ENCODE measurements at regions of chr18 and their contacts with region 1.

Region 1: GRCh38 chr18:12376718-12377555 is at the start of gene AFG3L2:
- DNase-seq: peak; percentile 100
- H3K4me3 Mint-ChIP-seq: peak within 1 kb of the TSS; percentile 91
- H3K27ac Mint-ChIP-seq: peak within 1 kb of the TSS; percentile 90
- H3K4me1 Mint-ChIP-seq: peaks cover 37% of the 10 kb centered on the region
- H3K27me3 Mint-ChIP-seq: peaks cover 9% of the 10 kb centered on the region
- total RNA-seq, gene AFG3L2: 61.8 and 65.1 TPM in 2 replicates

Region 2: DNA sequence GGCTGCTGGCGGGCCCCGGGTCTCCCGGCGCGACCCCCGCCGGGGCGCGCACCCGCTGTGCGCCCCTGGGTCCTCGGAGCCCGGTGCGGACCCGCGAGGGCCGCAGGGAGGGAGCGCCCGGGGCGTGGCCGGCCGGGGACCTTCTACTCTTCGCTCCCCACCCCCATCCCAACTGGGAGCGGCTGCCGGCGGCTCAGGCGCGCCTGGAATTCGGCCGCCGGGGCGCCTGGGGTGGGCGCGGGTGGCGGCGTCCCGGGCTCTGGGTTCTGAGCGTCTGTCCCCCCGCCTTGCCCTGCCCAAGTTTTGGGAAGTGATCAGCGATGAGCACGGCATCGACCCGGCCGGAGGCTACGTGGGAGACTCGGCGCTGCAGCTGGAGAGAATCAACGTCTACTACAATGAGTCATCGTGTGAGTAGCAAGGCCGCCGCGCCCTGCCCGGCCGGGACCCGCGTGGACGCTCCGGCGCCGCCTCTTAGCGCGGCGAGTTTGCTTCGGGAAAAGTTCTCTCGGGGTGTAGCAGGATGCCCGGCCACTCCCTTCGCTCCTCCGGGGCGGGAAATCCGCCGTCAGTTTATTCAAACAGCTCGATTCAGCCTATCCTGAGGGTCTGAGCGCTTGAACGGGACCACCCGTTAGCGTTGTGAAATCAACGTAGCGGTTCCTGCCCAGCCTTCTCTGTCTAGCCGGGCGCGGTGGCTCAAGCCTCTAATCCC is 68.4 kb before region 1 on chr18:
- intact Hi-C with region 1: loop called (anchors 1 kb)
- DNase-seq: peak; percentile 23
- H3K4me3 Mint-ChIP-seq: peak overlapping the region; percentile 84
- H3K27ac Mint-ChIP-seq: peak overlapping the region; percentile 68
- H3K4me1 Mint-ChIP-seq: peaks cover 16% of the 10 kb centered on the region
- H3K27me3 Mint-ChIP-seq: peaks cover 36% of the 10 kb centered on the region

Region 3: DNA sequence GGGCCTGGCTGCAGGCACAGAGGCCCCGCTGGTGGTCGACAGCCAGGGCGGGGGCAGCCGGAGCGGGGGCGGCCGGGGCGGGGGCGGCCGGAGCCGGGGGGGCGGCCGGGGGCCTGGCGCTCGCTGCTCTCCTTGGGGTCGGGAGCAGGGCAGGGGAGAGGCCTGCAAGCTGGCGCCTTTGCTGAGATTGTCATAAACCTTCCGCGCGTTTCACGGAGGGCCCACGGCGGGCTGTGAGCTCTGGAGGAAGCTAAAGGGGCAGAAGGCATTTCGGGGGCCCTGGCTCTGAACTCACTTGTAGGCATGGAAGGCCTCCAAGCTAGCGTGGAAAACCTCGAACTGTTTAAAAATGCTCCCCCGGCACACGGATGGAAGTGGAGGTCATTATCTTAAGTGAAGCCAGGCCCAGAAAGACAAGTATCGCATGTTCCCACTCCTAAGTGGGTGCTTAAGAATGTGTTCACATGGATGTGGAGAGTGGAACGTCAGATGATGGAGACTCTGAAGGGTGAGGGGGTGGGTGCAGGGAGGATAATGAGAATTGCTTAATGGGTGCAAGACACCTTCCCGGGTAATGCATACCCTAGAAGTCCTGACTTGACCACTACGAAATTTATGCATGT is 31.4 kb after region 1 on chr18:
- intact Hi-C with region 1: loop called (anchors 1 kb)
- DNase-seq: no peak
- H3K4me3 Mint-ChIP-seq: peak overlapping the region; percentile 74
- H3K27ac Mint-ChIP-seq: peak overlapping the region; percentile 21
- H3K4me1 Mint-ChIP-seq: peaks cover 29% of the 10 kb centered on the region
- H3K27me3 Mint-ChIP-seq: peaks cover 32% of the 10 kb centered on the region

Region 4: GRCh38 chr18:12883684-12884405 is 506.9 kb after region 1 on chr18 and contains the start of gene PTPN2:
- intact Hi-C with region 1: loop called (anchors 2 kb)
- DNase-seq: peak; percentile 90
- H3K4me3 Mint-ChIP-seq: peak within 1 kb of the TSS; percentile 94
- H3K27ac Mint-ChIP-seq: peak within 1 kb of the TSS; percentile 90
- H3K4me1 Mint-ChIP-seq: peaks cover 54% of the 10 kb centered on the region
- H3K27me3 Mint-ChIP-seq: no peaks in the 10 kb centered on the region
- total RNA-seq, gene PTPN2: 57.3 and 60.6 TPM in 2 replicates

Region 5: GRCh38 chr18:12990967-12991838 is 614.3 kb after region 1 on chr18 and contains the start of gene CEP192:
- intact Hi-C with region 1: loop called (anchors 1 kb)
- DNase-seq: peak; percentile 98
- H3K4me3 Mint-ChIP-seq: peak within 1 kb of the TSS; percentile 97
- H3K27ac Mint-ChIP-seq: peak within 1 kb of the TSS; percentile 98
- H3K4me1 Mint-ChIP-seq: peaks cover 31% of the 10 kb centered on the region
- H3K27me3 Mint-ChIP-seq: no peaks in the 10 kb centered on the region
- total RNA-seq, gene CEP192: 37.2 and 37.4 TPM in 2 replicates

Measured in activated T-helper 2 cell treated with anti-CD3 and anti-CD28 coated beads, Interferon-gamma antibody, Interleukin-2, Interleukin-4, amounts not matched to agents 10 μg/mL and 5 μg/mL and 100 μg/mL, durations not matched to agents 14 hours and 24 hours and 36 hours (primary cell).